B cell (primary cell): ENCODE measurements at regions of chr9 and their contacts with region 1.

Region 1: DNA sequence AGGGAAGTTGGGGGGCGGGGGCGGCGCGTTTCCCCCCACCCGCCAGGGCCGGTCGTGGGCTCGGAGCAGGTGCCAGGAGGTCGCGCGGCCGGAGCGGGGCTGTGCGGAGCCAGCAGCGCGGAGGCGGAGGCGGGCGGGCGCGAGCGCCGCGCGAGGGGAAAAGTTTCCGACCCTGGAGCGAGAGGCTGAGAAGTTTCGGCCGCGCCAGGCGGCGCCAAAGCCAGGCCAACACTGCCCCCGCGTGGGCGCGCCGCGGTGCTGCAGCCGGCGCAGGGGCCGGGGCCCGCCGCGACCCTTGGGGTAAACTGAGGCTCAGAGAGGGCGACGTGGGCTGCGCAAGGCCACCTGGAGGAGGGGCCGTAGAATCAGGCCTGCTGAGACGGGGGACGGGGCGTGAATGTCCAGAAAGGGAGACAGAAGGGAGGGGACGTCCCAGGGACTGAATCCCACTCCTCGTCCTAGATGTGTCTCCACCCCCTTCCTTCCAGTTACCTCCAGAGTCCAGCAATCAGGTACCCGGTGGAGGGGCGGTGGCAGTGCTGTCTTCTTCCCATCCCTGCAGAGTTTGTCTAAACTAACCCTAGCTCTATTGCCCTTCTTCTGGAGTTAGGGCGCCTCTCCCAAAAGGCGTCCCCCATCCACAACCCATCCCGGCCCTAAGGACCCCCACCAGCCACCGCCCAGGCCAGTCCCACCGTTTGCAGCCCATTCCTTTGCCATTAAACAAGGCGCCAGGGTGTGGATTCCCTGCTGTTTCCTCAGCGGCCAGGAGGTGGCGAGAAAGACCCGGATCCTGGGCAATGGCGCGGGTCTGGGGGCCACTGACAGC is 10.2 kb downstream of the C9orf50 start:
- DNase-seq: peak; percentile 81
- ATAC-seq: peak; percentile 77
- H3K4me3 ChIP-seq: peak overlapping the region; percentile 21 to 86 (median 59)
- H3K4me3 Mint-ChIP-seq: peak overlapping the region; percentile 79
- H3K27ac ChIP-seq: peak overlapping the region in 1 of 2 donors; percentile 39
- H3K27ac Mint-ChIP-seq: peak overlapping the region; percentile 61
- H3K4me1 ChIP-seq: peaks cover 19 to 21% of the 10 kb centered on the region in 2 donors
- H3K4me1 Mint-ChIP-seq: peaks cover 22% of the 10 kb centered on the region
- H3K27me3 ChIP-seq: peaks cover 0 to 13% (median 0%) of the 10 kb centered on the region in 4 experiments
- H3K27me3 Mint-ChIP-seq: no peaks in the 10 kb centered on the region
- CTCF ChIP-seq: peak; percentile 94

Region 2: GRCh38 chr9:129320575-129321263 is 290.0 kb before region 1 on chr9:
- CTCF ChIA-PET with region 1: interaction called, 7 read pairs
- POLR2A ChIA-PET with region 1: no interaction called
- intact Hi-C with region 1: loop called (anchors 1 kb)
- DNase-seq: peak; percentile 69
- ATAC-seq: peak; percentile 75
- H3K4me3 ChIP-seq: peak overlapping the region; percentile 32 to 55 (median 51)
- H3K4me3 Mint-ChIP-seq: peak overlapping the region; percentile 82
- H3K27ac ChIP-seq: no peak overlapping the region
- H3K27ac Mint-ChIP-seq: peak overlapping the region; percentile 51
- H3K4me1 ChIP-seq: peaks cover 10 to 16% of the 10 kb centered on the region in 2 donors
- H3K4me1 Mint-ChIP-seq: peaks cover 7% of the 10 kb centered on the region
- H3K27me3 ChIP-seq: peaks cover 0 to 33% (median 7%) of the 10 kb centered on the region in 4 experiments
- H3K27me3 Mint-ChIP-seq: peaks cover 19% of the 10 kb centered on the region
- CTCF ChIP-seq: no peak

Region 3: DNA sequence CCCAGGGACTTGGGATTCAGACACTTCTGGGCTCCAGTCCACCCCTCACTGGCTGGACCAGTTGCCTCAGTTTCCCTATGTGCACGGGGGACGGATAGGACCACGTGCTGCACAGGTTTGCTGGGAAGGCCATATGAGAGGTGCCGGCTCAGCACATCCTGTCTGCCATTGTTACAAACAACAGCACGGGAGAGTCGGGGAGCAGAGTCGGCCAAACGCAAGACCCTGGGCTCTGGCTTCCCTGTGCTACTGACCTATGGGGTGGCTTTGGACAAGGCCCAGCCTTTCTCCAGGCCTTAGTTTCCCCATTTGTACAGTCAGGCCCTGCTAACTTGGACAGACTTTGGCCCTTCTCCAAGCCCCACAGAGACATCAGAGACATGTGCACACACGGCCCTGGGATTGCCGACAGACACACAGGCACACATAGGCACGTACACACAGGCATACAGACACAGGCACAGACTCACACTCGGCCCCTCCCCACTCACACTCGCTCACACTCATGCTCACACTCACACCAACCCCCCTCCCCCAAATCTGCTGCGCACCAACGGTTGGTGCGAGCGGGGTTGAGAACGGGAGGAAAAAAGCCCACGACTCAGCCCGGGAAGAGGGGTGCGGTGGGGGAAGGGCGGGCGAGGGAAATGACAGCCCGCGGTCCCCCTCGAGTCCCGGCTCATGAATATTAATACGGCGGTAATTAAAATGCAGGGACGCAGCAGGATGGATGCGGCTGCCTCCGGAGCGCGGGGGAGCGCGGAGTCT is 122.9 kb before region 1 on chr9:
- CTCF ChIA-PET with region 1: no interaction called
- POLR2A ChIA-PET with region 1: no interaction called
- intact Hi-C with region 1: loop called (anchors 5 kb)
- DNase-seq: peak; percentile 69
- ATAC-seq: peak; percentile 13
- H3K4me3 ChIP-seq: peak overlapping the region; percentile 38 to 62 (median 49)
- H3K4me3 Mint-ChIP-seq: peak overlapping the region; percentile 89
- H3K27ac ChIP-seq: peak overlapping the region in 1 of 2 donors; percentile 63
- H3K27ac Mint-ChIP-seq: peak overlapping the region; percentile 90
- H3K4me1 ChIP-seq: peaks cover 24 to 28% of the 10 kb centered on the region in 2 donors
- H3K4me1 Mint-ChIP-seq: peaks cover 35% of the 10 kb centered on the region
- H3K27me3 ChIP-seq: peaks cover 0 to 38% (median 9%) of the 10 kb centered on the region in 4 experiments
- H3K27me3 Mint-ChIP-seq: peaks cover 15% of the 10 kb centered on the region
- CTCF ChIP-seq: no peak